Activated CD8-positive, alpha-beta T cell treated with anti-CD3 and anti-CD28 coated beads for 36 hours (primary cell): ENCODE measurements at regions of chr22 and their contacts with region 1.

Region 1: DNA sequence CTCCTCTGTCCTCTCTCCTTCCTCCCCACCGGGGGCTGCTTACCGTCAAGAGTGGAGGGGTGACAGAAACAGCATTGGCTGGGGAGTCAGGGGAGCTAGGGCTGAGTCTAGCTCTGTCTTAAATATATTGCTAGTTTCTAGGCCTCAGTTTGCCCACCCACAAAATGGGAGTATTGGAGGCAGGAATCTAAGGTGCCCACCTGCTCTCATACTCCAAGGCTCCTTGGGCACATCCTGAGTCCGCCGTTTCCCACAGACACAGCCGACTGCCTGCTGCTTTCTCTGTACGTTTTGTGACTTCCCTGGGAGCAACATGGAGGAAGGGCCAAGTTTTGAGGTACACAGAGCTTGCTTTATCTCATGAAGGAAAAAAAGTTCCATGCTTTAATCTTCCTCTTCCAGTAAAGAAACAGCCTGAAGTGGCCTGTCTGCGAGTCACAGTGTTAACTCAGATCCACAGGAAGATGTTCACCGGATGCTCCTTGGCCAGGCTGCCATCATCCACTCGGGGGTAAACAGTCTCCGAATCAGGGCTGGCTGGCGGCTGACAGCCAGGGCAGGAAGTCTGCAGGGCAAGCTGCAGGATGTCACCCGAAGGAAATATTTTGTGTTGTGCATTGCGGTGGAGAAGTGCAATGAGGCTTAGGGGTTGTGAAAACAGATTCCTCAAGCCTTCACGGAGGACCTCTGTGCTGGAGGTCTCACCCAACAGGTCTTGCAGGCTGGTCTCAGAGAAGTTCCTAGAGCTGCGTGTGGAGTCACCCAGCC is 11.0 kb upstream of the CERK start:
- DNase-seq: peak; percentile 72
- ATAC-seq: peak; percentile 88
- H3K4me3 Mint-ChIP-seq: peak overlapping the region; percentile 51
- H3K27ac Mint-ChIP-seq: peak overlapping the region; percentile 87
- H3K4me1 Mint-ChIP-seq: peaks cover 27% of the 10 kb centered on the region
- H3K27me3 Mint-ChIP-seq: no peaks in the 10 kb centered on the region
- CTCF ChIP-seq: no peak

Region 2: DNA sequence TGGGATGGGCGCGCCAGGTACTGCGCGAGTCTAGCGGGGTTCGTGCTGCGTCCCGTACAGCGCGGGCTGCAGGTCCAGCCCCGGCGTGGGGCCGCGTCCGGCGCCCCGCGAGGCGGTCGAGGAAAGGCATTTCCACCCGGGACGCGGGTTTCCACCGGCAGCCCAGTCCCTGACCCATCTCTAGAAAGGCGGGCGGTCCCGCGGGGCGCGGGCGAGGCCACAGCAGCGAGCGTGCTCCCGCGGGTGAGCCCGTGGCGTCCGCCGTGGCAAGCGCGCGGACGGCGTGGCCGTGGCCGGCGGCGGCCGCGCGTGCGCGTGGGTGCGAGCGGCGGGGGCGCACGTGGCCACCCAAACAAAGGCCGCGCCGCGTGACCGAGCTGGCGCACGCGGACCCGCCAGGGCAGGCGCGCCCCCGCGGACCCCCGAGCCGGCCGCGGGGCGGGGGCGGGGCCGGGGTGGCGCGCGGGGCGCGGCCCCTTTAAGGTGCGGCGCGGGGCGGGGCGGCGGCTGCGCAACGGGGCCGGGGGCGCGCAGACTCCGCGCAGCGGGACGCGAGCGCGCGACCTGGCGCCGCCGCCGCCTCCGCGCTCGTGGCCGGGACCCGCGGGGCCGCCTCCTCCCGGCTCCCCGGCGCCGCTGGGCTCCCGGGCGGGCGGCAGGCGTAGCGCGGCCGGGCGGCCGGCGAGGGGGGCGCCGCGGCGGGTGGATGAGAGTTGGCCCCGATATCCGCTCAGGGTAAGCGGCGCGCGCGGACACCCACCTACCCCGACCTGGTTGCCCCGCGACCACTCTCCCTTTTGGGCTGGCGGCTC is 172.3 kb before region 1 on chr22:
- CTCF ChIA-PET with region 1: no interaction called
- POLR2A ChIA-PET with region 1: no interaction called
- intact Hi-C with region 1: no loop called
- DNase-seq: peak; percentile 59
- ATAC-seq: peak; percentile 81
- H3K4me3 Mint-ChIP-seq: peak overlapping the region; percentile 71
- H3K27ac Mint-ChIP-seq: no peak overlapping the region
- H3K4me1 Mint-ChIP-seq: peaks cover 28% of the 10 kb centered on the region
- H3K27me3 Mint-ChIP-seq: no peaks in the 10 kb centered on the region
- CTCF ChIP-seq: no peak

Region 3: GRCh38 chr22:46737976-46738646 is 11.0 kb before region 1 on chr22 and contains the start of gene CERK:
- CTCF ChIA-PET with region 1: interaction called, 5 read pairs
- POLR2A ChIA-PET with region 1: interaction called, 14 read pairs
- intact Hi-C with region 1: no loop called
- DNase-seq: peak; percentile 43
- ATAC-seq: peak; percentile 43
- H3K4me3 Mint-ChIP-seq: peak within 1 kb of the TSS; percentile 93
- H3K27ac Mint-ChIP-seq: peak within 1 kb of the TSS; percentile 98
- H3K4me1 Mint-ChIP-seq: peaks cover 36% of the 10 kb centered on the region
- H3K27me3 Mint-ChIP-seq: no peaks in the 10 kb centered on the region
- CTCF ChIP-seq: no peak
- total RNA-seq, gene CERK: 38.4 to 41.8 TPM